Right cardiac atrium (tissue), 5 donors: ENCODE measurements at regions of chr2 and their contacts with region 1.

Region 1: GRCh38 chr2:105496271-105496670 is 97.4 kb upstream of the FHL2 start:
- DNase-seq: peak in 2 of 3 donors; percentile 62 to 66
- ATAC-seq: peak; percentile 73 to 82
- H3K4me3 ChIP-seq: no peak overlapping the region
- H3K27ac ChIP-seq: peak overlapping the region; percentile 94
- H3K4me1 ChIP-seq: peaks cover 8% of the 10 kb centered on the region
- H3K27me3 ChIP-seq: no peaks in the 10 kb centered on the region

Region 2: GRCh38 chr2:105388971-105389381 is 107.3 kb before region 1 on chr2:
- intact Hi-C with region 1: loop called in 1 of 4 experiments (anchors 10 kb)
- DNase-seq: no peak
- ATAC-seq: peak; percentile 25 to 36
- H3K4me3 ChIP-seq: no peak overlapping the region
- H3K27ac ChIP-seq: no peak overlapping the region
- H3K4me1 ChIP-seq: peaks cover 9% of the 10 kb centered on the region
- H3K27me3 ChIP-seq: no peaks in the 10 kb centered on the region

Region 3: GRCh38 chr2:105431367-105432043 is 64.8 kb before region 1 on chr2:
- intact Hi-C with region 1: loop called in 1 of 4 experiments (anchors 5 kb)
- DNase-seq: peak; percentile 67 to 90 (median 89)
- ATAC-seq: peak; percentile 78 to 90
- H3K4me3 ChIP-seq: no peak overlapping the region
- H3K27ac ChIP-seq: peak overlapping the region; percentile 75
- H3K4me1 ChIP-seq: no peaks in the 10 kb centered on the region
- H3K27me3 ChIP-seq: no peaks in the 10 kb centered on the region